ENCODE measurements at regions of chr3 and their contacts with region 1.

Region 1: DNA sequence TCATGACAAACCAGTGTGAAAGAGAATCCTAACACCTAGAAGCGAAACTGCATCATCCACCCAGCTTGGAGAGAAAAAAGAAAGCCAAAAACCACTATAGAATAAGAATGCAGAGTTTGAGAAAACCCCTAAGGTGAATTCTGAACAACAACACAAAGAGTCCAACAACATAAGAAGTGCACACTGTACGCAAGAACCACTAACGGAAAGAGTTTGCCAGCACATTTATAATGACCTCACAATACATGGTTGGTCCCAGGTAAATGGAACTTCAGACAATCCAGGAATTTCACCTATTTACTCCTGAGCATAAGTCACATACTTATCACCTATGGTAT is 128.3 kb upstream of the BHLHE40 start:
- DNase-seq: peak in 6 of 9 donors; percentile 19 to 64 (median 46)
- ATAC-seq: peak; percentile 83
- H3K4me3 ChIP-seq: no peak overlapping the region
- H3K4me3 Mint-ChIP-seq: peak overlapping the region in 9 of 10 donors; percentile 4 to 84 (median 56)
- H3K27ac ChIP-seq: peak overlapping the region; percentile 81
- H3K27ac Mint-ChIP-seq: peak overlapping the region; percentile 85 to 99 (median 90)
- H3K4me1 ChIP-seq: peaks cover 37 to 58% of the 10 kb centered on the region in 2 donors
- H3K4me1 Mint-ChIP-seq: peaks cover 49 to 92% (median 86%) of the 10 kb centered on the region in 7 donors
- H3K27me3 ChIP-seq: no peaks in the 10 kb centered on the region
- H3K27me3 Mint-ChIP-seq: no peaks in the 10 kb centered on the region

Region 2: DNA sequence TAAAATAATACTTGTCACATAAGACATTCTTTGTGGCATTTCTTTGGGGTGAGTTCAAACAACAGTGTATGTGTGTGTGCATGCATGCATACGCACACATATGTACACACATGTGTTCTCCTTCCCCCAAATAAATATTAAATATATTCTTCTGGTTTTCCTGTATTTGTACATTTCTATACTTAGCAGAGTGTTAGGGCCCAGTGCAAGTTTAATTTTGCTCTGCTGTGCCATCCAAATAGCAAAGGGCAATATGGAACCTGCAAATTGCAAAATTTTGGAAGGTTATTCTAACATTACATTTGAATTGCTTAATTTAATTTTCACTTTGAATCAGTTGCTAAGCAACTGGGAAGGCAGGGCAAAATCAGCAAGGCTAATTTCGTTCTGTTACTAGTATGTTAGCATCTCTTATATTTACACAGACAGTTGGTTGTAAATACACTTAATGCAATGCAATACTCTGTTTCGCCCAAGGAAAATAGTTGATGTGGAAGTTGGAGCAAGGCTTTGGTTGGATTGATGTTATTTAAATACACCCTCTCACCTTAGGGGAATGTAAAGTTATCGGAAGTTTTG is 227.4 kb before region 1 on chr3:
- CTCF ChIA-PET with region 1: no interaction called
- POLR2A ChIA-PET with region 1: no interaction called
- intact Hi-C with region 1: no loop called
- DNase-seq: no peak
- ATAC-seq: no peak
- H3K4me3 ChIP-seq: no peak overlapping the region
- H3K4me3 Mint-ChIP-seq: no peak overlapping the region
- H3K27ac ChIP-seq: no peak overlapping the region
- H3K27ac Mint-ChIP-seq: peak overlapping the region in 1 of 9 donors; percentile 77
- H3K4me1 ChIP-seq: no peaks in the 10 kb centered on the region
- H3K4me1 Mint-ChIP-seq: peaks cover 0 to 13% (median 12%) of the 10 kb centered on the region in 7 donors
- H3K27me3 ChIP-seq: no peaks in the 10 kb centered on the region
- H3K27me3 Mint-ChIP-seq: no peaks in the 10 kb centered on the region

Region 3: GRCh38 chr3:4722103-4722502 is 128.8 kb before region 1 on chr3:
- CTCF ChIA-PET with region 1: no interaction called
- POLR2A ChIA-PET with region 1: no interaction called
- intact Hi-C with region 1: loop called in 1 of 2 experiments (anchors 2 kb)
- DNase-seq: peak in 2 of 9 donors; percentile 27 to 33
- ATAC-seq: peak; percentile 76
- H3K4me3 ChIP-seq: no peak overlapping the region
- H3K4me3 Mint-ChIP-seq: peak overlapping the region in 1 of 10 donors; percentile 33
- H3K27ac ChIP-seq: no peak overlapping the region
- H3K27ac Mint-ChIP-seq: peak overlapping the region in 2 of 9 donors; percentile 34 to 82
- H3K4me1 ChIP-seq: no peaks in the 10 kb centered on the region
- H3K4me1 Mint-ChIP-seq: peaks cover 0 to 67% (median 9%) of the 10 kb centered on the region in 7 donors
- H3K27me3 ChIP-seq: no peaks in the 10 kb centered on the region
- H3K27me3 Mint-ChIP-seq: no peaks in the 10 kb centered on the region

Region 4: DNA sequence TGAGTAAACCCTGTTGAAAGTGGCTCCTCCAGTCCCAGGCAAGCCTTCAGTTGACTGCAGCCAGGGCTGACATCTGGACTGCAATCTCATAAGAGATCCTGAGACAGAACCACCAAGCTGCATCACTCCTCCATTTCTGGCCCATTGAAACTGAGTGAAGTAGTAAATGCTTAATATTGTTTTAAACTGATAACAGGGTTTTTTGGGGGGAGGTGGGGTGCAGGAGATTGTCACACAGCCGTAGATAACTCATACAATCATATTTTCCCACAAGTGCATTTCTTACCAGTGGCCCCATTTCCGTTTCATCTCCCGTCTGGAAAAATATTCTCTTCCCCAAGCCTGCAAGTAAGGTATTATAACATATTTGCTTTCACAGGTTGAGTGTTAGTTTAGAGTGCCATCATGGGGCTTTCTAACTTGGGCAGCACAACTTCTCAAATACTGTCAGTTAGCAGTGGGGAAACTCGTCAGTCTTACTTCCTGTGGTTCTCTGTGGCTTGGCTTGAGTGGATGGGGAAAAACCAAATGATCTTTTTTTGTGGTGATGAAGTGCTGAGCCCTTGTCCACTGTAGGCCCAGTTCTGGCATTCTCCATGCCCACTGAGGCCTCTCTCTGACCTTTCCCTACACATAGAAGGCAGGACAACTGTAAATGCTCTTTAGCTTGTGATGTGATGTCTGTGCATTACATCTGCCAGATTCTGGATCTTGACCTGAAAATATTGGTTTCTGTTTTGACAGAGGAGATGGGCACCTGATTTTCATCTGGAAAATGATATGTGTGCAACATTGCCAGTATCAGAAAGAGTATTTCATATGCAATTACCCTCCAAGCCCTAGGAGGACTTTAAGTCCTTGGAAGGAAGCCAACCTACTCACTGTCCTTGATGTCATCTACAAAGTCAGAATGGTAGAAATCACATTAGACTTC is 38.3 kb after region 1 on chr3:
- CTCF ChIA-PET with region 1: no interaction called
- POLR2A ChIA-PET with region 1: no interaction called
- intact Hi-C with region 1: loop called in 1 of 2 experiments (anchors 1 kb)
- DNase-seq: peak in 6 of 9 donors; percentile 9 to 51 (median 39)
- ATAC-seq: peak; percentile 90
- H3K4me3 ChIP-seq: no peak overlapping the region
- H3K4me3 Mint-ChIP-seq: peak overlapping the region in 8 of 10 donors; percentile 0 to 63 (median 36)
- H3K27ac ChIP-seq: no peak overlapping the region
- H3K27ac Mint-ChIP-seq: peak overlapping the region in 7 of 9 donors; percentile 18 to 91 (median 57)
- H3K4me1 ChIP-seq: peaks cover 13 to 15% of the 10 kb centered on the region in 2 donors
- H3K4me1 Mint-ChIP-seq: peaks cover 17 to 39% (median 18%) of the 10 kb centered on the region in 7 donors
- H3K27me3 ChIP-seq: no peaks in the 10 kb centered on the region
- H3K27me3 Mint-ChIP-seq: no peaks in the 10 kb centered on the region

Region 5: GRCh38 chr3:4906107-4906621 is 55.3 kb after region 1 on chr3:
- CTCF ChIA-PET with region 1: no interaction called
- POLR2A ChIA-PET with region 1: no interaction called
- intact Hi-C with region 1: loop called in 1 of 2 experiments (anchors 1 kb)
- DNase-seq: no peak
- ATAC-seq: no peak
- H3K4me3 ChIP-seq: no peak overlapping the region
- H3K4me3 Mint-ChIP-seq: peak overlapping the region in 2 of 10 donors; percentile 29 to 38
- H3K27ac ChIP-seq: no peak overlapping the region
- H3K27ac Mint-ChIP-seq: peak overlapping the region in 4 of 9 donors; percentile 7 to 75 (median 38)
- H3K4me1 ChIP-seq: peaks cover 14 to 35% of the 10 kb centered on the region in 2 donors
- H3K4me1 Mint-ChIP-seq: peaks cover 33 to 85% (median 58%) of the 10 kb centered on the region in 7 donors
- H3K27me3 ChIP-seq: no peaks in the 10 kb centered on the region
- H3K27me3 Mint-ChIP-seq: no peaks in the 10 kb centered on the region

Region 6: DNA sequence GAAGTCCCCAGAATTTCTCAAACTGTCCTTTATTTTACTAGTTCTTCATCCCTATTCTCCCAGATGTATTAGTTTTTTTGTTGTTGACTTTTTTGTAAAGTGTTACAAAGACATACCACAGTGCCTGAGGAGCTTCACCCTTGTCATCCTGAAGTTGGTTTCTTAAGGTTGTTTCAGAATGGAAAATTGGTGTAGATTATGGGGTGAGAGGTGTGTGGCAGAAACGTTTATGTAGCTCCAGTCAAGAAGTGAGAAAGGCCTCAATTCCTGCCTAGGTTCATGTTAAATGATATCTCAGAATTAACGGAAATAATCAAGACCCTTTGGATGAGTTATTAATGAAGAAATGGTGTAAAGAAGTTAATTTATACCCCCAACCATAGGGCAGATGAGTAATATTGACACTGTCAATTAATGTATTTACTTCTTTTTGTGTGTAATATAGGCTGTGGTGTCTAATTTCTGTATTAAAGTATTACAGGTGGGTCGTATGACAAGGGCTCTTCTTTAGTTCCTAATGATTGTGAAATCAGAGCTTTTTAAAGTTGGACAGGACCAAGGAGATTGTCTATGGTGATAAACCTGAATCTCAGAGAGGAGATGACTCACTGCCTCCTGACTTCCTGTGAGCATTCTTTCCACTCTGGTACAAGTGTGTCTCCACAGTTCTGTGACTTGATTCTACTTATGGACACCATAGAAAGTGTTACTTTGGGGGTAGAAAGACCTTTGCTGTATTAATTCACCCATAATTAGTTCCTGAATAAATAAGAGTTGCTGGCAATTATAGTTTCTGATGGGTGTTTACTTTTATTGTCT is 343.7 kb after region 1 on chr3:
- CTCF ChIA-PET with region 1: no interaction called
- POLR2A ChIA-PET with region 1: no interaction called
- intact Hi-C with region 1: loop called in 1 of 2 experiments (anchors 5 kb)
- DNase-seq: peak in 1 of 9 donors; percentile 69
- ATAC-seq: peak; percentile 54
- H3K4me3 ChIP-seq: no peak overlapping the region
- H3K4me3 Mint-ChIP-seq: peak overlapping the region; percentile 2 to 78 (median 46)
- H3K27ac ChIP-seq: peak overlapping the region; percentile 64
- H3K27ac Mint-ChIP-seq: peak overlapping the region; percentile 63 to 96 (median 93)
- H3K4me1 ChIP-seq: peaks cover 76 to 88% of the 10 kb centered on the region in 2 donors
- H3K4me1 Mint-ChIP-seq: peaks cover 73 to 90% (median 87%) of the 10 kb centered on the region in 7 donors
- H3K27me3 ChIP-seq: no peaks in the 10 kb centered on the region
- H3K27me3 Mint-ChIP-seq: no peaks in the 10 kb centered on the region

Measured in naive thymus-derived CD4-positive, alpha-beta T cell (primary cell).